ENCODE measurements at regions of chr20 and their contacts with region 1.

Region 1: GRCh38 chr20:49330544-49331239 is 52.8 kb upstream of the ZNFX1 start:
- DNase-seq: no peak
- ATAC-seq: no peak
- H3K4me3 ChIP-seq: no peak overlapping the region
- H3K4me3 Mint-ChIP-seq: no peak overlapping the region
- H3K27ac ChIP-seq: no peak overlapping the region
- H3K27ac Mint-ChIP-seq: no peak overlapping the region
- H3K4me1 ChIP-seq: no peaks in the 10 kb centered on the region
- H3K4me1 Mint-ChIP-seq: no peaks in the 10 kb centered on the region
- H3K27me3 ChIP-seq: peaks cover 0 to 4% of the 10 kb centered on the region in 2 experiments
- H3K27me3 Mint-ChIP-seq: peaks cover 29% of the 10 kb centered on the region
- CTCF ChIP-seq: no peak

Region 2: DNA sequence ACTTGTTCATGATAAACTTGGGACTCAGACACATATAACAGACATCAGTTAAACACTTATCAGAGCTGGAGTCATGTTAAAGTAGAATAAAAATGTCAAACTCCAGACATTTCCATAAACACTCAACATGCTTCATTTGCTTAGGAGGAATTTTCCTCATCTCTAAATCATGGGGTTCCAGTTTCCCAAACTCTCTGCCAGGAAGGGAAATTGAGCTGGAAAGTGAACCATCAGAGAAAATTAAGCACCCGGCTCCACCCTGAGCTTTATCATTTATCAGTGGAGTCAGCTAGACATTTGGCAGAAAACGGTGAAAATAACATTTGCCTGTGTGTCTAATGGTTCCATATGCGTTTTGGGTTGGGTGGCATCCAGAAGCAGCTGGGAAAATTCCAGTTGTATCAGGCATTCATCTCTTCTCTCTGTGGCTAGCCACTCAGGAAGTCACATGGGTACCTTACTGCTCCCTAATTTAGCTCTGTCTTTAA is 27.6 kb before region 1 on chr20:
- CTCF ChIA-PET with region 1: no interaction called
- POLR2A ChIA-PET with region 1: no interaction called
- intact Hi-C with region 1: no loop called
- DNase-seq: no peak
- ATAC-seq: no peak
- H3K4me3 ChIP-seq: no peak overlapping the region
- H3K4me3 Mint-ChIP-seq: no peak overlapping the region
- H3K27ac ChIP-seq: no peak overlapping the region
- H3K27ac Mint-ChIP-seq: no peak overlapping the region
- H3K4me1 ChIP-seq: peaks cover 13% of the 10 kb centered on the region
- H3K4me1 Mint-ChIP-seq: peaks cover 14% of the 10 kb centered on the region
- H3K27me3 ChIP-seq: no peaks in the 10 kb centered on the region
- H3K27me3 Mint-ChIP-seq: no peaks in the 10 kb centered on the region
- CTCF ChIP-seq: no peak

Region 3: DNA sequence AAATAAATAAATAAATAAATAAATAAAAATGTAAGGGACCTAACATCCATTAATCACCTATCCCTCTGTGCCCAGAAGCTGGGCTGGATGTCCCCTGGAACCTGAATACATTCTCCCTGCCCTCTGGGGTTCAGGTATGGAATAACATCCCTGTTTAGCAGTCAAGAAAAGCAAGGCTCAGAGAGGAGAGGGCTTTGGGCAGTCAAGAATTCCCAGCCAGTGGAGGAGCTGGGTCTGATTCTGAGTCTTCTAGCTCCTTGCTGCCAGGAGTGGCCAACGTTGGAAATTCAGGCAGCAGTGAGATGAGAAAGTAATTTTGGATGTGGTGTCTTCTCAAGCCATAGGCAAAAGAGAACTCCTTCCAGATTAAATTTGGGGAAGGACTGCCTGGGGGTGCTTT is 10.2 kb before region 1 on chr20:
- CTCF ChIA-PET with region 1: no interaction called
- POLR2A ChIA-PET with region 1: no interaction called
- intact Hi-C with region 1: no loop called
- DNase-seq: no peak
- ATAC-seq: no peak
- H3K4me3 ChIP-seq: no peak overlapping the region
- H3K4me3 Mint-ChIP-seq: no peak overlapping the region
- H3K27ac ChIP-seq: no peak overlapping the region
- H3K27ac Mint-ChIP-seq: no peak overlapping the region
- H3K4me1 ChIP-seq: peaks cover 30% of the 10 kb centered on the region
- H3K4me1 Mint-ChIP-seq: peaks cover 31% of the 10 kb centered on the region
- H3K27me3 ChIP-seq: peaks cover 33 to 36% of the 10 kb centered on the region in 2 experiments
- H3K27me3 Mint-ChIP-seq: peaks cover 63% of the 10 kb centered on the region
- CTCF ChIP-seq: no peak

Region 4: DNA sequence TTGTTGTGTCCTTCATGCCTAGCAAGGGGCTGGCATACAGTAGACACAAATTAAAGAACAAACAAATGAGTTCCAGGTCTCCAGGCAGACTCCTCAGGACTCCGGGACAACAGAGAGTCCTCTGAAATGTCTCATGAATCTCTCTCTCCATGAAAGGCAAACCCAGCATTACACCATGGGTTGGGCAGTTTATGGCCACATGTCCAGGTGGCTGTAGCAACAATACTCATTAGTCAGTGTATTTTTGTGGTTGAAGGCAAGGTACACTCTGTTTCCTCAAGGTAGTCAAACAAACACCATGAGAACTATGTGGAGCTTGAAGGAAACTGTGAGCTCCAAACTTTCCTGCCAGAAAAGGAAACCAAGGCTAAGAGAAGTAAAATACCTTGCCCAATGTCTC is 89.6 kb after region 1 on chr20:
- CTCF ChIA-PET with region 1: no interaction called
- POLR2A ChIA-PET with region 1: no interaction called
- intact Hi-C with region 1: no loop called
- DNase-seq: no peak
- ATAC-seq: no peak
- H3K4me3 ChIP-seq: no peak overlapping the region
- H3K4me3 Mint-ChIP-seq: no peak overlapping the region
- H3K27ac ChIP-seq: no peak overlapping the region
- H3K27ac Mint-ChIP-seq: no peak overlapping the region
- H3K4me1 ChIP-seq: no peaks in the 10 kb centered on the region
- H3K4me1 Mint-ChIP-seq: no peaks in the 10 kb centered on the region
- H3K27me3 ChIP-seq: peaks cover 0 to 3% of the 10 kb centered on the region in 2 experiments
- H3K27me3 Mint-ChIP-seq: peaks cover 1% of the 10 kb centered on the region
- CTCF ChIP-seq: no peak

Region 5: GRCh38 chr20:49484180-49485140 is 153.8 kb after region 1 on chr20:
- CTCF ChIA-PET with region 1: no interaction called
- POLR2A ChIA-PET with region 1: no interaction called
- intact Hi-C with region 1: loop called in 1 of 2 experiments (anchors 5 kb)
- DNase-seq: peak; percentile 21 to 72 (median 42)
- ATAC-seq: peak; percentile 78
- H3K4me3 ChIP-seq: peak overlapping the region; percentile 33
- H3K4me3 Mint-ChIP-seq: peak overlapping the region; percentile 76
- H3K27ac ChIP-seq: no peak overlapping the region
- H3K27ac Mint-ChIP-seq: no peak overlapping the region
- H3K4me1 ChIP-seq: peaks cover 22% of the 10 kb centered on the region
- H3K4me1 Mint-ChIP-seq: peaks cover 8% of the 10 kb centered on the region
- H3K27me3 ChIP-seq: peaks cover 59 to 76% of the 10 kb centered on the region in 2 experiments
- H3K27me3 Mint-ChIP-seq: peaks cover 80% of the 10 kb centered on the region
- CTCF ChIP-seq: peak; percentile 36

Measured in CD4-positive, alpha-beta T cell (primary cell).